ENCODE measurements at regions of chr16 and their contacts with region 1.

Region 1: GRCh38 chr16:13919683-13920509 is at the start of gene ERCC4:
- DNase-seq: peak; percentile 100
- ATAC-seq: peak; percentile 99
- H3K4me3 ChIP-seq: peak within 1 kb of the TSS; percentile 89 to 98 (median 98)
- H3K27ac ChIP-seq: peak within 1 kb of the TSS; percentile 49
- H3K4me1 ChIP-seq: peaks cover 38% of the 10 kb centered on the region
- H3K27me3 ChIP-seq: no peaks in the 10 kb centered on the region; a peak in 1 of 5 replicates
- CTCF ChIP-seq: peak; percentile 91
- EP300 ChIP-seq: no peak
- POLR2A ChIP-seq: peak; percentile 92 to 97
- RAD21 ChIP-seq: peak; percentile 48
- total RNA-seq, gene ERCC4: 15.2 and 27.9 TPM in 2 replicates

Region 2: DNA sequence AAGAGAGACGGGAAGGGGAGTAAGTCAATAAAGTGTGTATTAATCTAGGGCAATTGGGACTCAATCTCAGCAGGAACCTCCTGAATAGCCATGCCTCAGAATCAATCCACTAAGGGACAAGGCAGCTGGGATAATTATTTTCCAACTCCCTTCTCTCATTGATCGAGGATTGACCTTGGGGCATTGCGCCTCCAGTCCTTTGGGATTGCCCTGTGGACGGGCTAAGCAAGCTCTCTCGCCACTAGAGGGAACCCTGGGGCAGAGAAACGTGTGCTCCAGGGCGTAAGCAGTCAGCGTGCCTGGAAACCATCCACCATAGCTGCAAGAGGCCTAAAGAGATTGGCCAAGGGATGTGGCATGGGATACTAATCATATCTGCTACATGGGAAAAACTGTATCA is 53.8 kb before region 1 on chr16:
- CTCF ChIA-PET with region 1: interaction called, 34 read pairs
- POLR2A ChIA-PET with region 1: interaction called, 3 read pairs
- in situ Hi-C with region 1: no loop called
- intact Hi-C with region 1: no loop called
- DNase-seq: peak; percentile 86
- ATAC-seq: peak; percentile 100
- H3K4me3 ChIP-seq: no peak overlapping the region
- H3K27ac ChIP-seq: no peak overlapping the region
- H3K4me1 ChIP-seq: peaks cover 14% of the 10 kb centered on the region
- H3K27me3 ChIP-seq: peaks cover 0 to 2% of the 10 kb centered on the region in 2 experiments; a peak in 1 of 5 replicates
- CTCF ChIP-seq: peak; percentile 98
- EP300 ChIP-seq: no peak
- POLR2A ChIP-seq: no peak
- RAD21 ChIP-seq: peak; percentile 92

Region 3: DNA sequence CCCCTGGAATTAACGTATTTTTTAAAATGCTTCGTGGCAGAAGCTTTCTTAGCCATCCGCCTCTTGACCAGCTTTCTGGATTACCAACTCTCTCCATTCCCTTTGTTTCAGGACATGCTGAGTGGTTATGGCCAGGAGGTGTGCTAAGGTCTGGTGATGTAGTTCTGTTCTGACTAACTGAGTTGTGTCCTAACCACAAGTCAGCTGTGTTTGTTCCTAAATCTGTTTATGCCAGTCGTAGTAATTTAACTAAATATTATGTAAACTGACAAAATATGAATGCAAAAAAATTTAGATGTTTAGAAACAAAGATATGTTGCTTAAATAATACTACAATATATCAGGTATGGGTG is 212.8 kb after region 1 on chr16:
- CTCF ChIA-PET with region 1: no interaction called
- POLR2A ChIA-PET with region 1: no interaction called
- in situ Hi-C with region 1: no loop called
- intact Hi-C with region 1: loop called (anchors 10 kb)
- DNase-seq: no peak
- ATAC-seq: no peak
- H3K4me3 ChIP-seq: no peak overlapping the region
- H3K27ac ChIP-seq: peak overlapping the region; percentile 3
- H3K4me1 ChIP-seq: peaks cover 18% of the 10 kb centered on the region
- H3K27me3 ChIP-seq: no peaks in the 10 kb centered on the region
- CTCF ChIP-seq: no peak
- EP300 ChIP-seq: no peak
- POLR2A ChIP-seq: no peak
- RAD21 ChIP-seq: no peak

Region 4: GRCh38 chr16:14219983-14220382 is 300.1 kb after region 1 on chr16:
- CTCF ChIA-PET with region 1: no interaction called
- POLR2A ChIA-PET with region 1: interaction called, 3 read pairs
- in situ Hi-C with region 1: loop called (anchors 10 kb)
- intact Hi-C with region 1: no loop called
- DNase-seq: peak; percentile 24
- ATAC-seq: peak; percentile 50
- H3K4me3 ChIP-seq: no peak overlapping the region
- H3K27ac ChIP-seq: no peak overlapping the region
- H3K4me1 ChIP-seq: peaks cover 8% of the 10 kb centered on the region
- H3K27me3 ChIP-seq: no peaks in the 10 kb centered on the region
- CTCF ChIP-seq: no peak
- EP300 ChIP-seq: no peak
- POLR2A ChIP-seq: no peak
- RAD21 ChIP-seq: no peak

Region 5: GRCh38 chr16:14285513-14286385 is 365.9 kb after region 1 on chr16:
- CTCF ChIA-PET with region 1: interaction called, 8 read pairs
- POLR2A ChIA-PET with region 1: interaction called, 16 read pairs
- in situ Hi-C with region 1: loop called (anchors 5 kb)
- intact Hi-C with region 1: loop called (anchors 1 kb)
- DNase-seq: peak; percentile 95
- ATAC-seq: peak; percentile 84
- H3K4me3 ChIP-seq: peak overlapping the region; percentile 77 to 94 (median 89)
- H3K27ac ChIP-seq: peak overlapping the region; percentile 35
- H3K4me1 ChIP-seq: peaks cover 36% of the 10 kb centered on the region
- H3K27me3 ChIP-seq: no peaks in the 10 kb centered on the region; a peak in 1 of 5 replicates
- CTCF ChIP-seq: peak; percentile 34
- EP300 ChIP-seq: peak; percentile 30 to 67; a peak in 3 of 4 replicates
- POLR2A ChIP-seq: no peak
- RAD21 ChIP-seq: peak; percentile 79